Activated CD4-positive, alpha-beta memory T cell treated with anti-CD3 and anti-CD28 coated beads for 36 hours (primary cell): ENCODE measurements at regions of chr7 and their contacts with region 1.

Region 1: GRCh38 chr7:138903186-138903820 is 77.9 kb downstream of the KIAA1549 start:
- DNase-seq: peak; percentile 86
- H3K4me3 Mint-ChIP-seq: peak overlapping the region; percentile 73
- H3K27ac Mint-ChIP-seq: peak overlapping the region; percentile 76
- H3K4me1 Mint-ChIP-seq: peaks cover 32% of the 10 kb centered on the region
- H3K27me3 Mint-ChIP-seq: peaks cover 28% of the 10 kb centered on the region

Region 2: DNA sequence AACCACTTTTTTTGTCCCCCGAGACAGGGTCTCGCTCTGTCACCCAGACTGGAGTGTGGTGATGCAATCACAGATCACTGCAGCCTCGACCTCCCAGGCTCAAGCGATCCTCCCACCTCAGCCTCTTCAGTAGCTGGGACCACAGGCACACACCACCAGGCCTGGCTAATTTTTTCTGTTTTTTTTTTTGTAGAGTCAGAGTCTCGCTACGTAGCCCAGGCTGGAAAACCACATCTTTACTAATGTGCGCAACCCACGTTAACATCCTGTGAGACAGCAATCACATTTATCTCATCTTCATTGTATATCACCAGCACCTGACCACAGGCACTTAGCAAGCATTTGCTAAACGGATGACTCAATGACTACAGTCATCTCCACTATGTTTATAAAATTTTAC is 27.5 kb before region 1 on chr7:
- CTCF ChIA-PET with region 1: no interaction called
- POLR2A ChIA-PET with region 1: interaction called, 3 read pairs
- intact Hi-C with region 1: loop called (anchors 2 kb)
- DNase-seq: peak; percentile 80
- H3K4me3 Mint-ChIP-seq: peak overlapping the region; percentile 29
- H3K27ac Mint-ChIP-seq: peak overlapping the region; percentile 85
- H3K4me1 Mint-ChIP-seq: peaks cover 25% of the 10 kb centered on the region
- H3K27me3 Mint-ChIP-seq: no peaks in the 10 kb centered on the region

Region 3: GRCh38 chr7:138919216-138919615 is 15.9 kb after region 1 on chr7:
- CTCF ChIA-PET with region 1: no interaction called
- POLR2A ChIA-PET with region 1: no interaction called
- intact Hi-C with region 1: no loop called
- DNase-seq: no peak
- H3K4me3 Mint-ChIP-seq: no peak overlapping the region
- H3K27ac Mint-ChIP-seq: no peak overlapping the region
- H3K4me1 Mint-ChIP-seq: no peaks in the 10 kb centered on the region
- H3K27me3 Mint-ChIP-seq: peaks cover 5% of the 10 kb centered on the region

Region 4: GRCh38 chr7:139252451-139252850 is 349.1 kb after region 1 on chr7:
- CTCF ChIA-PET with region 1: no interaction called
- POLR2A ChIA-PET with region 1: no interaction called
- intact Hi-C with region 1: no loop called
- DNase-seq: no peak
- H3K4me3 Mint-ChIP-seq: no peak overlapping the region
- H3K27ac Mint-ChIP-seq: no peak overlapping the region
- H3K4me1 Mint-ChIP-seq: no peaks in the 10 kb centered on the region
- H3K27me3 Mint-ChIP-seq: no peaks in the 10 kb centered on the region